Right ventricle myocardium inferior (tissue), 1 donor: ENCODE measurements at regions of chr15 and their contacts with region 1.

Region 1: GRCh38 chr15:30073915-30074314 is 8.8 kb upstream of the GOLGA8J start:
- DNase-seq: no peak
- ATAC-seq: no peak

Region 2: GRCh38 chr15:29668120-29668602 is 405.8 kb before region 1 on chr15:
- intact Hi-C with region 1: loop called (anchors 10 kb)
- DNase-seq: peak; percentile 68
- ATAC-seq: peak; percentile 72

Region 3: GRCh38 chr15:29747837-29748417 is 326.0 kb before region 1 on chr15:
- intact Hi-C with region 1: loop called (anchors 10 kb)
- DNase-seq: no peak
- ATAC-seq: no peak

Region 4: GRCh38 chr15:29942143-29942542 is 131.8 kb before region 1 on chr15:
- intact Hi-C with region 1: loop called (anchors 10 kb)
- DNase-seq: no peak
- ATAC-seq: no peak